ENCODE measurements at regions of chr3 and their contacts with region 1.

Region 1: GRCh38 chr3:72996473-72997333 is at the start of gene PPP4R2:
- DNase-seq: peak; percentile 95
- H3K4me3 ChIP-seq: peak within 1 kb of the TSS; percentile 74 to 94 (median 91)
- H3K27ac ChIP-seq: peak within 1 kb of the TSS; percentile 97 to 99 (median 98)
- H3K4me1 ChIP-seq: peaks cover 39 to 47% (median 45%) of the 10 kb centered on the region in 4 donors
- H3K27me3 ChIP-seq: no peaks in the 10 kb centered on the region
- CTCF ChIP-seq: peak in 1 of 3 experiments; percentile 4
- EP300 ChIP-seq: no peak
- POLR2A ChIP-seq: peak; percentile 93
- total RNA-seq, gene PPP4R2: 24.6 to 60.6 (median 33.9) TPM

Region 2: DNA sequence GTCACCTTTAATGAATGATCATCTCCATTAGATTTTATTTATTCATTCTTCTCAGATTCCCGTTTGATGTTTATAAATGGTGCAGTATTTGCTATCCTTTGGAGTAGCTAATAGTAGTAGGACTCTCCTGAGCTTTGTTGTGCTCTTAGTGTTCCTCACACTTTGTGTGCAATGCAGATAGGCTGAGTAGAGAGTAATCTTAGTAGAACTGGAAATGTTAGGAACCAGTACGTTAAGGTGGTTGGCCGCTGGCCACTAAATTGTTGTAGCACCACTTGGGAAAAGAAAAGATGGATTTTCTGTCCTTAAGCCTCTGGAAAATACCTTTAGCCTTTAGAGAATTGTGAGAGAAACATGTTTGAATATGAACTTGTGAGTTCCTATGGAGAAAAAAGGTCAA is 44.8 kb after region 1 on chr3:
- intact Hi-C with region 1: loop called (anchors 5 kb)
- DNase-seq: no peak
- H3K4me3 ChIP-seq: no peak overlapping the region
- H3K27ac ChIP-seq: peak overlapping the region; percentile 7 to 67 (median 45)
- H3K4me1 ChIP-seq: peaks cover 51 to 84% (median 77%) of the 10 kb centered on the region in 4 donors
- H3K27me3 ChIP-seq: no peaks in the 10 kb centered on the region
- CTCF ChIP-seq: no peak
- EP300 ChIP-seq: no peak
- POLR2A ChIP-seq: no peak